Lower leg skin (tissue), 4 donors: ENCODE measurements at regions of chr2 and their contacts with region 1.

Region 1: GRCh38 chr2:9753276-9753600 is 90.0 kb upstream of the TAF1B start:
- DNase-seq: peak in 1 of 2 donors; percentile 66
- H3K4me3 ChIP-seq: no peak overlapping the region
- CTCF ChIP-seq: no peak
- POLR2A ChIP-seq: no peak

Region 2: GRCh38 chr2:9555297-9556141 is 197.7 kb before region 1 on chr2 and contains the start of gene ADAM17:
- intact Hi-C with region 1: loop called (anchors 10 kb)
- DNase-seq: peak; percentile 94 to 99
- H3K4me3 ChIP-seq: peak within 1 kb of the TSS; percentile 87
- CTCF ChIP-seq: no peak
- POLR2A ChIP-seq: peak in 1 of 2 donors; percentile 48
- total RNA-seq, gene ADAM17: 23.0 to 29.8 (median 27.5) TPM